ENCODE measurements at regions of chr16 and their contacts with region 1.

Region 1: GRCh38 chr16:30874821-30875717 is 18.8 kb downstream of the BCL7C start:
- DNase-seq: peak; percentile 93
- H3K4me3 ChIP-seq: peak overlapping the region; percentile 71 to 85 (median 74)
- H3K27ac ChIP-seq: peak overlapping the region; percentile 95 to 98 (median 97)
- H3K4me1 ChIP-seq: peaks cover 17 to 34% (median 24%) of the 10 kb centered on the region in 4 donors
- H3K27me3 ChIP-seq: no peaks in the 10 kb centered on the region
- CTCF ChIP-seq: peak in 1 of 5 experiments; percentile 14
- EP300 ChIP-seq: no peak
- POLR2A ChIP-seq: peak; percentile 94

Region 2: GRCh38 chr16:30813821-30814189 is 61.3 kb before region 1 on chr16:
- in situ Hi-C with region 1: no loop called
- intact Hi-C with region 1: loop called (anchors 5 kb)
- DNase-seq: no peak
- H3K4me3 ChIP-seq: peak overlapping the region; percentile 12 to 58 (median 42)
- H3K27ac ChIP-seq: peak overlapping the region; percentile 83 to 90 (median 86)
- H3K4me1 ChIP-seq: peaks cover 0 to 20% (median 8%) of the 10 kb centered on the region in 4 donors
- H3K27me3 ChIP-seq: no peaks in the 10 kb centered on the region
- CTCF ChIP-seq: no peak
- EP300 ChIP-seq: no peak
- POLR2A ChIP-seq: no peak

Region 3: DNA sequence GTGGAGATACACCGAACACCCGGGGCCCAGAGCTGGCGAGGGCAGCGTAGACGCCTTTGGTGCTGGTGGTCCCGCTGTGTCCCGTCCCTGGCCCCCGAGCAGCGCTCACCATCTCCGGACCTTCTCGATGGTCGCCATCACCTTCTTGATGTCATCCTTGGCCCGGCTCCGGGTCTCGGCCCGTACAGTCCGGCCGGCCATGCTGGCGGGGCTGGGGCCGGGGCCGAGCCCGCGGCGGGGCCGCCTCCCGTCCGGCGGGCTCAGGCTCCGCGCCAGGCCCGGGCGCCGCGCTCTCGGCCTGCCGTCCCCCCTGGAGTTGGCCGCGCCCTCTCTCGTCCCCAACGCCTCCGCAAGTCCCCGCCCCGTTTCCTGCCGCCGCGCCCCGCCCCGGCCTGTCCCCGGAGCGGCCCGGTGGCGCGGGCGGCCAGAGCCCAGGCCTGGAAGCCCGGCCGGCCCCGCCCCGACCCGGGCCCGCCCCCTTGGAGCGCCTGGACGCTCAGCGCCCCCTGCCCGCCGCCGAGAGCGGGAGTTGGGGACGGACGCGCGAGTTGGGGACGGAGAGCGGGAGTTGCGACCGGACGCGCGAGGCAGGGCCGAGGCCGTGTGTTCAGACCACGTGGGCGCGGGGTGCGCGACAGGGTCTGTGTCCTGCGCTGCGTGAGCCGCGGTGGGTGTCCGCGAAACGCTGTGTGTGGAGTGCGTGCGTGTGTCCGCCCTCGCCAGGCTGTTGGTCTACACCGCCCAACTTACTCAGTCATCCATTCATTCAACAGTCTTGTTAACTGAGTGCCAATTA is 18.9 kb after region 1 on chr16 and contains the start of gene BCL7C:
- in situ Hi-C with region 1: no loop called
- intact Hi-C with region 1: loop called (anchors 2 kb)
- DNase-seq: peak; percentile 95
- H3K4me3 ChIP-seq: peak within 1 kb of the TSS; percentile 83 to 96 (median 86)
- H3K27ac ChIP-seq: peak within 1 kb of the TSS; percentile 89 to 94 (median 91)
- H3K4me1 ChIP-seq: peaks cover 19 to 42% (median 31%) of the 10 kb centered on the region in 4 donors
- H3K27me3 ChIP-seq: no peaks in the 10 kb centered on the region
- CTCF ChIP-seq: peak in 4 of 5 experiments; percentile 26 to 57 (median 38)
- EP300 ChIP-seq: no peak
- POLR2A ChIP-seq: peak; percentile 42
- total RNA-seq, gene BCL7C: 13.8 to 57.3 (median 24.0) TPM